H1 (cell line): ENCODE measurements at regions of chr1 and their contacts with region 1.

Region 1: DNA sequence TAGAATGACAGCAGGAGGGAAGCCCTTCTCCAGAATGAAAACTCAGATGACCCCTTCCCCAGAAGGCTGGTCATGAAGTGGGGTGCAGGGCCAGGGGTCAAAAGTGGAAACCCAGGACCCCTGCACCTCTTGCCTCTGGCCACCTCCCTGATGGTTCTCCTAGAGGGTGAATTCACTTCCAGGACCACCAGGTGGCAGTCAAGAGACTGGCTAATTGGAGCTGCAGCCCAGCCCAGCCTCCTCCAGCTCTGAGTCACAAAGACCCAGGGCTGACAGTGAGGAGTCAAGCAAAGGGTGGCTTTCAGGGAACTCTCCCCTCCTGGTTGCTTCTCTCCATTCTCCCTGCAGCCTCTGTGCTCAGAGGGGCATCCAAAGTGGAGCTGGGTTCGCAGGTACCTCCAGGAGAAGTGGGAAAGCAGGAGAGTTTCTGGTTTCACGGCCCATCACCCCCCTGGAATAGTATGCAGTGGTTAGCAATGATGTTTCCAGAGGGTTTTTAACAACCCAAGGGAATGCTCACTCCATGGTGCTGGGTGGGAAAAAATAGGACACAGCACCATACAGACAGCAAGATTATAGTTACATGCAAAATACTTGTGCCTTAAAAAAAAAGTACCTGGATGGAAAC is 6.1 kb upstream of the EPHB2 start:
- DNase-seq: peak; percentile 29 to 88
- H3K4me3 ChIP-seq: no peak overlapping the region
- H3K27ac ChIP-seq: no peak overlapping the region
- H3K4me1 ChIP-seq: peaks cover 0 to 4% (median 0%) of the 10 kb centered on the region in 4 experiments; a peak in 1 of 7 replicates
- H3K27me3 ChIP-seq: peaks cover 0 to 3% (median 1%) of the 10 kb centered on the region in 4 experiments; a peak in 3 of 7 replicates
- CTCF ChIP-seq: peak; percentile 71 to 92 (median 91)
- EP300 ChIP-seq: no peak
- POLR2A ChIP-seq: no peak
- RAD21 ChIP-seq: peak; percentile 84 to 87

Region 2: DNA sequence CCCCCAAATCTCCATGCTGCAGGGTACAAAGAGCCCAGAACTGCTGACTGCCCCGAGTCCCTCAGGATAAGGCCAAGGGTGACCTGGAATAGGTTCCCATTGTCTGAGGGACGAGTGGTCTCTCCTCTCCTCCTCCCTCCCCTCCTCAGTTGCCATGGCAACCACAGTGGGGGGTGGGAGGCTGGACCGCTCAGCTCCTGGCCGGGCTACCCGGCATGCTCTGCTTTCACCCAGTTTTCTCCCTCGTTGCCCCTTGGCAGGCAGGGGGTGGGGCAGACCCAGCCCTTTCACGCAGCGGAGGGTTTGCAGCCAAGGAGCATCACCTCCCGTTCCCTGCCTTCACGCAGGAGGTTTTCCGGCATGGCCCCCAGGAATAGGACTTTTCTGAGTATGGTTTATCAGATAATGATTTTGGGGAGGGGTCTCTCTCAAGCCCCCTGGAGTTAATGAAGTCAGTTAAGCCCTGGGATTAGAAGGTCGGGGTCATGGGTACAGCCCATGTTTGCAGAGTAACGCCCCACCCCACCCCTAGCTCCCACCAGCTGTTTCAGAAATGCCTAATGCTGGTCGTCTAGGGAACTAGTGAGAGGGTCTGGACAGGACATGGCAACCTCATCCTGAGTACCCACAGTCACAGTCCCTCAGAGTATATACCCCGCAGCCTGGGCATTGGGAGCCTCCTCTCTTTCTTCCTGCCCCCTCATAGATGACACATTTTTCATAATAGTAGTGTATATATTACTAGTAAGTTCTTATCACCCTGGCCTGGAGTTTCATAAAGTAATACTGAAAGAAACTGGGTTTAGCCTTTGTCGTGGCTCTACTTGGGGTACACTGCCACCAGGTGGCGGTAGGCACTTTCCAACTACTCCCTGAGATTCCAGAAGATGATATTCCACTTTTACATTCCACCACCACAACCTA is 30.8 kb before region 1 on chr1:
- CTCF ChIA-PET with region 1: interaction called, 43 read pairs
- POLR2A ChIA-PET with region 1: no interaction called
- DNase-seq: peak in 1 of 2 experiments; percentile 84
- H3K4me3 ChIP-seq: peak overlapping the region in 1 of 4 experiments; percentile 10; a peak in 1 of 8 replicates
- H3K27ac ChIP-seq: no peak overlapping the region
- H3K4me1 ChIP-seq: peaks cover 0 to 10% (median 5%) of the 10 kb centered on the region in 4 experiments; a peak in 4 of 7 replicates
- H3K27me3 ChIP-seq: no peaks in the 10 kb centered on the region; a peak in 1 of 7 replicates
- CTCF ChIP-seq: peak; percentile 59 to 76 (median 73)
- EP300 ChIP-seq: no peak
- POLR2A ChIP-seq: no peak
- RAD21 ChIP-seq: peak; percentile 81

Region 3: DNA sequence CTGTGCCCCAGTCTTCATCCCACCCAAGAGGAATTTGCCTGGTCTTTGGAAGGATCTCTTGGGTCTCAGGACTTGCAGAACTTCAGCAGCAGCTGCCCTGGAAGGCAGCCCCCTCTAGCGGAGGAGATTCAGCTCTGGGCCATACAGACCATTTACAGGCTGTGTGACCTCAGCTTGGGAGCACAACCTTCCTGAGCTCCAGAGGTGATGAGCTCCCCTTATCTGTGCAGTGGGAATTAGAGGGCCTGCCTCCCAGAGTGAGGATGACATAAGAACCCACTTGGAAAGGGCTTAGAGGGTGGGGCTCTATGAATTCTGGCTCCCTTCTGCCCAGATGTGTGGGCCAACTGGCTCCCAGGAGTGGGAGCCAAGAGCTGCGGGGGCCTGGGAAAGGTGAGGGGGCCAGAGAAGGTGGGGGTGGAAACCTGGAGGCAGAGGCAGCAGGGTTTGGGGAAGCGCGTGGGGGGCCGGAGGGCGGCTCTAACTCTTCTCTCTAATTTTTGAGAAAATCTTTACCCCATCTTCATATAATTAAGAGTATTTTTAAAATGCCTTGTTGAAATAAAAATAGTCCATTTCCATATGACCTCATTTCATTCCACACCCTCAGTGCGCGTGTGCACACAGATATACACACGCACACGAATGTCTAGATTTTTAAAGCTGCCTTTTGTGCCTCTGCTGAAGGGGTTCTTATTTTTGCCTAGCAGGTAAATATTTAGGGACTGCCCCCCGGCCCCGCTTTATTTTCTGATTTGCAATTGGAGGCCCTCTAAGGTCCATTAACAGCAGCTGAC is 27.6 kb after region 1 on chr1:
- CTCF ChIA-PET with region 1: interaction called, 34 read pairs
- POLR2A ChIA-PET with region 1: no interaction called
- DNase-seq: no peak
- H3K4me3 ChIP-seq: no peak overlapping the region
- H3K27ac ChIP-seq: no peak overlapping the region
- H3K4me1 ChIP-seq: peaks cover 0 to 12% (median 5%) of the 10 kb centered on the region in 4 experiments; a peak in 5 of 7 replicates
- H3K27me3 ChIP-seq: no peaks in the 10 kb centered on the region
- CTCF ChIP-seq: peak; percentile 66 to 82 (median 68)
- EP300 ChIP-seq: no peak
- POLR2A ChIP-seq: no peak
- RAD21 ChIP-seq: peak; percentile 62 to 78

Region 4: GRCh38 chr1:22808676-22809483 is 104.3 kb after region 1 on chr1:
- CTCF ChIA-PET with region 1: interaction called, 12 read pairs
- POLR2A ChIA-PET with region 1: no interaction called
- DNase-seq: no peak
- H3K4me3 ChIP-seq: no peak overlapping the region
- H3K27ac ChIP-seq: no peak overlapping the region
- H3K4me1 ChIP-seq: peaks cover 9 to 32% (median 18%) of the 10 kb centered on the region in 4 experiments
- H3K27me3 ChIP-seq: no peaks in the 10 kb centered on the region
- CTCF ChIP-seq: no peak
- EP300 ChIP-seq: no peak
- POLR2A ChIP-seq: no peak
- RAD21 ChIP-seq: no peak

Region 5: DNA sequence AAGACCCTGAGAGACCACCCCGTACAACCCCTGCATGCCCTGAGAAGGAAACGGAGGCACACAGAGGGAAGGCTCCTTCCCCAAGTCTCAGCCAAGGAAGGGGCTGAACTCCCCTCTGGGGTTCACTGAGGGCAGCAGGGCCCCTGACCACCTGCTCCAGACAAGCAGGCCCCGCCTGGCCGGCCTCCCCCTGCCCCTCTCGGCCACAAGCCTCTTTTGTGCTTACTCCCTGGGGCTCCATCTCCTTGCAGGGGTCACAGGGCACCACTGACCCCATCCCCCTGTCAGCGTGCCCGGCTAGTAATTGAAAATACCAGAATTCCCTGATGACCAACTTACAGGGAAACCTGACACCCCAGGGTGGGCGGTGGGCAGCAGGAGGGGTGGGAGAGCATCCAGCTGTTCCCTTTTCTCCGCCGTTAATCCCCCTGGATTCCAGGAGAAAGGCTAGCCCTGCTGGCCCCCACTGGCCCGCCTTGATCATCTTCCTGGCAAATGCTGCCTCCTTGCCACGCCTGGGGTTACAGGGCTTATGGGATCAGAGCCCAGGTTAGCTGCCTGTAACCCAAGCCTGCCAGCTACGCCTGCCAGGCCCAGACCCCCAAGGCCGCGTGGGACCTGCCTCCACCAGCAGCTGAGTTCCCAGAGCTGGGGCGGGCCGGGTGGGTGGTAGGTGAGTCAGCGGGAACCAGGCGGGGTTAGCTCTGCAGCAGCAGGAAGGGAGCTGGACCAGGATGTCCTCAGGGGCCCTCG is 172.0 kb after region 1 on chr1:
- CTCF ChIA-PET with region 1: interaction called, 10 read pairs
- POLR2A ChIA-PET with region 1: no interaction called
- DNase-seq: no peak
- H3K4me3 ChIP-seq: no peak overlapping the region
- H3K27ac ChIP-seq: 0 out of 2 replicates have a peak overlapping the region, but pooled peaks have one; percentile 15
- H3K4me1 ChIP-seq: peaks cover 0 to 17% (median 8%) of the 10 kb centered on the region in 4 experiments; a peak in 6 of 7 replicates
- H3K27me3 ChIP-seq: no peaks in the 10 kb centered on the region
- CTCF ChIP-seq: no peak
- EP300 ChIP-seq: no peak
- POLR2A ChIP-seq: no peak
- RAD21 ChIP-seq: no peak

Region 6: GRCh38 chr1:22910986-22911651 is 206.6 kb after region 1 on chr1:
- CTCF ChIA-PET with region 1: interaction called, 10 read pairs
- POLR2A ChIA-PET with region 1: no interaction called
- DNase-seq: no peak
- H3K4me3 ChIP-seq: no peak overlapping the region
- H3K27ac ChIP-seq: no peak overlapping the region
- H3K4me1 ChIP-seq: no peaks in the 10 kb centered on the region
- H3K27me3 ChIP-seq: no peaks in the 10 kb centered on the region
- CTCF ChIP-seq: no peak
- EP300 ChIP-seq: no peak
- POLR2A ChIP-seq: no peak
- RAD21 ChIP-seq: no peak